ENCODE measurements at regions of chr2 and their contacts with region 1.

Region 1: DNA sequence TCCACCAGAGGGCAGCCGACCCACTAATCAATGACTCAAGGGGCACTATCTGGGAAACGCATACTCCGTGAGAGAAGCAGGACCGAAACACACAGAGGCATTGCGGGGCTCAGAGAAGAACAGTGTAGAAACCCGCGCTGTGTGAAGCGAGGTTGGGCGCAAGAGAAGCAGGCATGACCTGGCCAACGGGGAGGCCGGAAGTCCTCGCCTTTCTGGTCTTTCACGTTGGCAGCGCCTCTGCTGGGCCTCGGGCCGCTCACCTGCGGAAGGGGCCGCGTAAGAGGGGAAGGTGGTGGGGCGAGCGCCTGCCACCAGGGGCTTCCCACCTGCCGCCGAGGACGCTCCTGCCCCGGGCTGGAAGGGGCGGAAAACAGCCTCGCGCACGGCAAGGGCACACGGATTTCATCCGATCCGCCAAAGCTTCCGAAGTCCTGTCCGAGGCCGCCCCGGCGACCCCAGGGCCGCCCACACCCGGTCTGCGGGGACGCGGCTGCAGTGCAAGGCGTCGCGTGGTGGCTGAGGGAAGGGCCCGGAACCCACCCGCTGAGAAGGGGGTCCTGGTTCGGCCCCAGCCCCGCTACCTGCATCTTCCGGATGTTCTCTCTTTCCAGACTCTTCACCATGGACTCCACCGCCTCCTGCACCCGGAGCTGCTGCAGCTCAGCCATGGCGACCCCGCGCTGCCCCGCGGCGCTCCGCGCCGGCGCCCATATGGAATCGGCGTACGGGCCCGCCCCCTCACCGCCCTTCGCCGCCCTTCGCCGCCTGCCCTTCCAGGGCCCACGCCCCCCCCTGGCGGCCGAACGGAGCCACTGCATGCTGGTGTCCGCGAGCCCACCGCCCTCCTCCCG is at the start of gene FAM136A:
- DNase-seq: peak; percentile 91
- ATAC-seq: peak; percentile 90
- H3K4me3 Mint-ChIP-seq: peak within 1 kb of the TSS; percentile 86
- H3K27ac Mint-ChIP-seq: peak within 1 kb of the TSS; percentile 95
- H3K4me1 Mint-ChIP-seq: peaks cover 38% of the 10 kb centered on the region
- H3K27me3 Mint-ChIP-seq: no peaks in the 10 kb centered on the region
- total RNA-seq, gene FAM136A: 39.7 to 50.2 TPM

Region 2: DNA sequence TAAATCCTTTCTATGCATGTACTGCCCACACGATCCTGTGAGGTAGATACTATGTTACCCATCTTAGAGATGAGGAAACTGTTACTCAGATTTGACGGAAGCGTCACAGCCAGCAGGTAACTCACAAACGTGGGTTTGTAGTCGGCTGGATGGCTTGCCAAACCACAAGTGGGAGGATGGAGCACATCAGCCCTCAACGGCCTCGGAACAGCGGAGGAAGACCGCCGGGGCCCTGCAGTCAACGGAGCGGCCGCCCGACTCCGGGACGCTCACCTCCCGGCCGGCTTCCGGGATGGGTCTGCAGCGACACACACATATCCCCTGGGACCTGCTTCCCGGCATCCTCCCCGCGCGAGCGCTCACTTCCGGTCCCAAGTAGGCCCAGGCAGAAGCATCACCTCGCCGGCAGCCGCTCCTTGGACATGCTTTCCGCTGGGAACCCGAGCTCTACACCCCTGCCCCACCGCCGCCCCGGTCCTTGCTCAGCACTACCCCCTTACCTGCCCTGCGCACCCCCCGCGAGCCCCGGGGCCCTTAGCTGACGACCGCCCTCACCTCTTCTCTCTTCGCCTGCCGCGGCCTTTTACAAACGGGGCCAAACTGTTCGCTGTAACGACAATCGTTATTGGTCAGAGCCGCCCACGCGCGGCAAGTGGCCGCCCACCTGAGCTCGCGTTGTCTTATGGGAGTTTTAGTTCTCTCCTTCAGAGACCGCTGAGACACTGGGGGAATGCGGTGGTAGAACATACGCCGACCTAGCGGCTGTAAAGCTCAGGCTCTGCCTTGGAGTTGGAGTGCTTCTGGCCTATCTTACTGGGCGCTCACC is 110.9 kb before region 1 on chr2 and contains the start of gene C2orf42:
- CTCF ChIA-PET with region 1: interaction called, 14 read pairs
- DNase-seq: peak; percentile 97
- ATAC-seq: peak; percentile 88
- H3K4me3 Mint-ChIP-seq: peak within 1 kb of the TSS; percentile 88
- H3K27ac Mint-ChIP-seq: peak within 1 kb of the TSS; percentile 93
- H3K4me1 Mint-ChIP-seq: peaks cover 20% of the 10 kb centered on the region
- H3K27me3 Mint-ChIP-seq: no peaks in the 10 kb centered on the region
- total RNA-seq, gene C2orf42: 26.6 to 28.6 TPM

Region 3: DNA sequence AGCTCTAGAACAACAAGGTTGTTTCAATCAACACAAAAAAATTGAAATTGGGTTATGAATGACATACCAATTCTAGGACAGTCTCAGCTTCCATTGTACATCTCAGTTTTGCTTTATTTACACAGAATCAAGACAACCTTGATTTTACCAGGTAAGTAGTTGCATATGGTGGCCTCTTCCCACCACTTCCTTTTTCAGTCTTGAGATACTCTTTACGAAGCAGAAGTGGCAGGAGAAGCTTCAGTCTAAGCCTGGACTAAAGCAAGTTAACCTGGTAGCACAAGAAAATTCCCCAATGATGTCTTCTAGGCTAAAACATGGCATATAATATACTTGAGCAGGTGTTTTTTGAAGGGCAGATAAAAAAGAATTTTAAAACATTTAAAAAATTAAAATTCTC is 11.0 kb after region 1 on chr2:
- CTCF ChIA-PET with region 1: interaction called, 18 read pairs
- DNase-seq: no peak
- ATAC-seq: no peak
- H3K4me3 Mint-ChIP-seq: no peak overlapping the region
- H3K27ac Mint-ChIP-seq: no peak overlapping the region
- H3K4me1 Mint-ChIP-seq: peaks cover 4% of the 10 kb centered on the region
- H3K27me3 Mint-ChIP-seq: peaks cover 9% of the 10 kb centered on the region

Region 4: GRCh38 chr2:70340921-70341765 is 39.6 kb after region 1 on chr2:
- CTCF ChIA-PET with region 1: interaction called, 12 read pairs
- DNase-seq: peak; percentile 43
- ATAC-seq: no peak
- H3K4me3 Mint-ChIP-seq: no peak overlapping the region
- H3K27ac Mint-ChIP-seq: no peak overlapping the region
- H3K4me1 Mint-ChIP-seq: no peaks in the 10 kb centered on the region
- H3K27me3 Mint-ChIP-seq: peaks cover 25% of the 10 kb centered on the region

Region 5: DNA sequence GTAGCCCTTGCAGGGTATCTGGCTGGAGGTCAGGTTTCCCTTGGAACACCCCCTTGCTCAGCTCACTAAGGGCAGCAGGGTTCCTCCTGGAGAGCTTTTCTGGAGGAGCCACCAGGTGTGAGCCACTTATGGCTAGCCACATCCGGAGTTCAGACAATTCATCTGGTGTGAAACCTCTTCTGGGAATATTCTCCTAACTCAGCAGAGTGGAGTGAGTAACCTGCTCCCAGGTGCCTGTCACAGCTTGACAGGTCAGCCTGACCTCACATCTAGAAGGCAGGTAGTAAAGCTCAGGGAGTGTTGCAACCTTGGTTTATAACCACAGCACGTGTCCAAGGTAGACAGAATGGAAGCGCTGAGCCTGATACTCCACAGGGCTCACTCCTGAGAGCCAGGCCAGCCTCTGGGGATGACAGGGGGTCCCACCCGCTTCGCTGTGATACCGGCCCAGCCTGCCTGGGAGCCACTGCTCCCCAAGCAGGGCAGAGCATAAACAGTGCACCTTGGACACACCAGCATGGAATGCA is 314.7 kb after region 1 on chr2:
- CTCF ChIA-PET with region 1: interaction called, 74 read pairs
- DNase-seq: no peak
- ATAC-seq: no peak
- H3K4me3 Mint-ChIP-seq: no peak overlapping the region
- H3K27ac Mint-ChIP-seq: no peak overlapping the region
- H3K4me1 Mint-ChIP-seq: peaks cover 6% of the 10 kb centered on the region
- H3K27me3 Mint-ChIP-seq: peaks cover 14% of the 10 kb centered on the region

Region 6: DNA sequence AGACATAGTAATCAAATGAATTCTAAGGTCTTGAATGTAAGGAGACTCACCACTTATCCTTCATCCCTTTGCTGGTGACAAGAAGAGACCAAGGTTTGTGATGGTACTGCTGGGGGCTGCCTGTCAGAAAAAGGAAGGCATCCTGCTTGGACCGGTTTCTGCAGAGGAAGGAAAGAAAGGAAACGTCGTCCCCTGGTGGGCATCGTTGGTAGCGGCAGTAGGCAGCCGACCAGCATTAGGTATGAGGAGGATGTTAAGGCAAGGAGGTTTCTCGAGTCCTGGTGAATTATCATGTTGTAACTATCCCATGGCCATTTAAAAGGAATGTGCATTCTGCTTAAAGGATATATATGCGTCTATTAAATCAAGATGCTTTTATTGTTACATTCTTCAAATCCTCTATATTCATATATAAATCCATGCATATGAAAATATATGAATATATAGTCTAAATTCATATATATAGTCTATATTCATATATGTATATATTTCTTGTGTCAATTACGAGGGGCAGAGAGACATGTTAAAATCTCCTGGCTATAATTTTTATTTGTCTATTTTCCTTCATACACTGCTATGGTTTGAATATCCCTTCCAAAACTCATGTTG is 346.4 kb after region 1 on chr2:
- CTCF ChIA-PET with region 1: interaction called, 36 read pairs
- DNase-seq: peak; percentile 79
- ATAC-seq: peak; percentile 86
- H3K4me3 Mint-ChIP-seq: no peak overlapping the region
- H3K27ac Mint-ChIP-seq: no peak overlapping the region
- H3K4me1 Mint-ChIP-seq: peaks cover 2% of the 10 kb centered on the region
- H3K27me3 Mint-ChIP-seq: peaks cover 29% of the 10 kb centered on the region